Panc1 (cell line): ENCODE measurements at regions of chr15 and their contacts with region 1.

Region 1: DNA sequence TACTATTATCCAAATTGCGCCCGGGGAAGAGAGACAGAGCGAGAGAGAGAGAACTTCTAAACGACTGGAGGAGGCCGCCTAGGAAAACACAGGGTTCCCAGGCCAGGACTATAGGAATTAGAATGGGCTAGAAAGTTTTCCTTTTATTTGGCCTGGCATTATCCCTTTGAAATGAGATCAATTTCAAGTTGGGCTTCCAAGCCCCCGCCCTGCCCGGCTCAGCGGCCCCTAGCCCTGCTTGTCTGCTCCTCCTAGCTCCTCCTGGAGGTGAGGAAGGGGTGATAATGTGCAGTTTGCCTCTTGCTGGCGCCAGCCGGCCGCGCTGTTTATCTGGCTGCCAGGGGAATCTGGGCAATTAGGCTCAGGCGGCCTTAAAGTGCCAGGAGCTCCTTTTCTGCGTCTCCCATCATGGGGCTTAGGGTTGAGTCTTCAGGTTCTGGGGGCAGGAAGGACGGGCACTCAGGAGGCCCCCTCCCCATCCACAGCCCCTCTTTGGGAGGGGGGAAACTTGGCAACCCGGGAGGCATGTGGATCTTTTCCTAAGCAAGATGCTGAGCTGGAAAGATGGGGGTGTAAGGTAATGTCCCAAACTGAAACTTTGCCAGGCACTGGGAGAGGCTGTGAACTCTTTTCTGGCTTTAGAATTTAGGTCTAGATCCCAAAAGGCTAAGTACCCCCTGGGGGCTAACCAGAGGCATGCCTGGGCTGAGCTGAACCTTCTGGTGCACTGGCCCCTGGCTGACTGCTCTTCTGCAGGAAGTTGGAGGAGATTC is 5.5 kb downstream of the SMAD6 start:
- DNase-seq: no peak
- ATAC-seq: peak; percentile 32
- H3K4me3 ChIP-seq: peak overlapping the region; percentile 91 to 97
- H3K27ac ChIP-seq: peak overlapping the region; percentile 94
- H3K4me1 ChIP-seq: peaks cover 80% of the 10 kb centered on the region
- H3K27me3 ChIP-seq: no peaks in the 10 kb centered on the region
- CTCF ChIP-seq: peak; percentile 56; the same call in 1 of the 2 replicates

Region 2: DNA sequence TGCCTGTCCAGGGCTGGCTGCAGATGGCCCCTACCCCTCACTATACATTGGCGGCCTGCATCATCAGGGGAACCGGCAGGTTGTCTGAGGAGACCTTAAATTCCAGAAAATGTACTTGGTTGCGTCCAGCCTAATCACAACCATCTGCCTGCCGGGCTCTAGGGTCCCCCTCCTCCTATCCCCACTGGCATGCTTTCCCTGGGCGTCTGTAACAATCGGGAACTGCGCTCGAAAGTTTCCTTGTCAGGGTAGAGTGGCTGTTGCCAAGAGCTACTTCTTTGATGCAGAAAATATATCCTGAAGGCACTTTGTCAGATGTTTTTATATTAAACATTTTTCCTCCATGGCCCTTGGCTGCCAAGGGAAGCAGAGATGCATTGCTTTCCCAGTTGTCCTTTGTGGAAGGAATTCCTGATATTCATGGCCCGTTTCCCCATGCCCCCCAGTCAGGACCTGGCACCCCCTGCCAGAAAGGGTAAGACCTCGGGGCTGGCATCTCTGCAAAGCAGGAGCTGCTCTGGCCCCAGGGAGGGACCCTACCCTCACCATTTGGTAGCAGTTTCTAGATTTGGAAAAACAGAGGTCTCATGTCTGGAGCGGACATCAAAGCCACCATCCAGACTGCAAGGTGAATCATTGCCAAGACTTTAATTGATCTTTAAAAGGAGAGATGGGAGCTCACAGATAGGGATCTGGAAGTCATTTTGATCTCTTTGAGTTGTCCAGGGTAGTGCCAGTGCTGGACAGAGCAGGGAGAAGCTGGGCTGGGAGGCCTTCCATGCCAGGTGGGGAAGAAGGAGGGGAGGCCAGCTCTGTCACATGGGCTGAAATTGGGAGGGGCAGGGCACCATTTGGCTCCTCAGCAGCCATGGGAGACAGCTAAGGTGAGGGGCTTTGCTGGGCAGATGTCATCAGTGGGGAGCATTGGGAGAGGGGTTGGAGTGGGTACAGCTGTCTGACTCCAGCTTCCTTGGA is 17.6 kb after region 1 on chr15:
- CTCF ChIA-PET with region 1: interaction called, 3 read pairs
- POLR2A ChIA-PET with region 1: interaction called, 14 read pairs
- in situ Hi-C with region 1: no loop called
- intact Hi-C with region 1: no loop called
- DNase-seq: no peak
- ATAC-seq: 0 out of 2 replicates have a peak, but pooled peaks have one; percentile 5
- H3K4me3 ChIP-seq: no peak overlapping the region
- H3K27ac ChIP-seq: peak overlapping the region; percentile 41; the same call in 1 of the 2 replicates
- H3K4me1 ChIP-seq: peaks cover 78% of the 10 kb centered on the region
- H3K27me3 ChIP-seq: no peaks in the 10 kb centered on the region
- CTCF ChIP-seq: no peak

Region 3: GRCh38 chr15:66774001-66774814 is 66.7 kb after region 1 on chr15:
- CTCF ChIA-PET with region 1: interaction called, 3 read pairs
- POLR2A ChIA-PET with region 1: no interaction called
- in situ Hi-C with region 1: no loop called
- intact Hi-C with region 1: loop called (anchors 2 kb)
- DNase-seq: peak; percentile 66
- ATAC-seq: peak; percentile 89
- H3K4me3 ChIP-seq: peak overlapping the region in 1 of 2 experiments; percentile 15; a peak in 1 of 4 replicates
- H3K27ac ChIP-seq: peak overlapping the region; percentile 93
- H3K4me1 ChIP-seq: peaks cover 96% of the 10 kb centered on the region
- H3K27me3 ChIP-seq: no peaks in the 10 kb centered on the region
- CTCF ChIP-seq: peak; percentile 99

Region 4: GRCh38 chr15:66803182-66803729 is 95.8 kb after region 1 on chr15:
- CTCF ChIA-PET with region 1: no interaction called
- POLR2A ChIA-PET with region 1: interaction called, 14 read pairs
- in situ Hi-C with region 1: no loop called
- intact Hi-C with region 1: no loop called
- DNase-seq: peak; percentile 80
- ATAC-seq: peak; percentile 98
- H3K4me3 ChIP-seq: no peak overlapping the region
- H3K27ac ChIP-seq: peak overlapping the region; percentile 99
- H3K4me1 ChIP-seq: peaks cover 58% of the 10 kb centered on the region
- H3K27me3 ChIP-seq: no peaks in the 10 kb centered on the region
- CTCF ChIP-seq: no peak

Region 5: DNA sequence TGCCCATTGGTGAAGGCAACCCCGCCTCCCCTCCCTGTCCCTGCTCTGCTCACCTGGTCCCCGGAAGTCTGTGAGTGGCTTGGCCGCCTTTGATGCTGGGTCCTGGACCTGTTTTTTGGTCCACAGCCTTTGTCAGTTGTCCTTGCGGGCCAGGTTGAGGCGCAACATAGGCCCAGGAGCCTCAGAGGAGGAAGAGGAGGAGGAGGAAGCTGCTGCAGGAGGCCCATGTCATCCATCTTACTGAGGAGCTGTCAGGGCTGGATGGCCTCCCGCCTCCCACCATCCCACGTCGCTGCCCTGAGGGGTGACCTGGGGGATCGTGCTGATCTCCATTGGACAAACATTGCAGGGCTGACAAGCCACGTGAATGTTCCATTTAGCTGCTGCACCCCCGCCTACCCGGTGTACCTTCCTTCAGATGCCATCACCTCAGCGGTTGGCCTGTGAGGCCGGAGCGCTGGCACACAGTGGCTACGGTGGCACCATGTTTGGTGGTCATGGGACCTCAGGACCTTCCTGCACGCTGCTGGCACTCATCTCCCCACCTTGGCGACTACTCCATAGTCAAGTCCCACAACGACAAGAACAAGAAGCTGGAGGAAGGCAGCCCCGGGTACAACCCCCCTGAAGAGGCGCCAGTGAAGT is 100.8 kb after region 1 on chr15:
- CTCF ChIA-PET with region 1: no interaction called
- POLR2A ChIA-PET with region 1: interaction called, 14 read pairs
- in situ Hi-C with region 1: no loop called
- intact Hi-C with region 1: no loop called
- DNase-seq: no peak
- ATAC-seq: no peak
- H3K4me3 ChIP-seq: no peak overlapping the region
- H3K27ac ChIP-seq: peak overlapping the region; percentile 23; the same call in 1 of the 2 replicates
- H3K4me1 ChIP-seq: peaks cover 14% of the 10 kb centered on the region
- H3K27me3 ChIP-seq: no peaks in the 10 kb centered on the region
- CTCF ChIP-seq: no peak

Region 6: DNA sequence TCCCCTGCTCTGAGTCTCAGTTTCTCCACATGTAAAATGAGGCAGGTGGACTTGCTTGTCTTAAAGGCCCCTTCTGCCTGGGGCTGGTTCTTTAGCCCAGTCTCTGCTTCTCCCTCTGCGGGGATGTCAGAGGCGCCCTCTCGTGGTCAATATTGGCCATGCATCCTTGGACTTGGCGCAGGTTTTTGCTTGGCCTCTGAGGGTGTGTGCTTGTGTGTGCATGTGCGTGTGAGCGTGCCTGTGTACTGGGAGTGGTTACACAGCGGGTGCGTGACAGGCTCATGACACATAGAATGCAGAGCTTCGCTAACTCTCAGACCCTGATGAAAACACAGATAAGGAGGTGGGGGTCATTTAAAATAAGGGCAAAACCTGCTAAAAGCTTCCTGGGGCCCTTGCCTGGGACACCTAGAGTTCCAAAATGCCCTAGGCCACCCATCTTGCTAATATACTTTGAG is 155.4 kb after region 1 on chr15:
- CTCF ChIA-PET with region 1: interaction called, 10 read pairs
- POLR2A ChIA-PET with region 1: no interaction called
- in situ Hi-C with region 1: no loop called
- intact Hi-C with region 1: no loop called
- DNase-seq: peak; percentile 64
- ATAC-seq: peak; percentile 83
- H3K4me3 ChIP-seq: no peak overlapping the region
- H3K27ac ChIP-seq: peak overlapping the region; percentile 90
- H3K4me1 ChIP-seq: peaks cover 56% of the 10 kb centered on the region
- H3K27me3 ChIP-seq: no peaks in the 10 kb centered on the region
- CTCF ChIP-seq: peak; percentile 97